Activated CD8-positive, alpha-beta T cell treated with anti-CD3 and anti-CD28 coated beads for 36 hours (primary cell): ENCODE measurements at regions of chr15 and their contacts with region 1.

Region 1: DNA sequence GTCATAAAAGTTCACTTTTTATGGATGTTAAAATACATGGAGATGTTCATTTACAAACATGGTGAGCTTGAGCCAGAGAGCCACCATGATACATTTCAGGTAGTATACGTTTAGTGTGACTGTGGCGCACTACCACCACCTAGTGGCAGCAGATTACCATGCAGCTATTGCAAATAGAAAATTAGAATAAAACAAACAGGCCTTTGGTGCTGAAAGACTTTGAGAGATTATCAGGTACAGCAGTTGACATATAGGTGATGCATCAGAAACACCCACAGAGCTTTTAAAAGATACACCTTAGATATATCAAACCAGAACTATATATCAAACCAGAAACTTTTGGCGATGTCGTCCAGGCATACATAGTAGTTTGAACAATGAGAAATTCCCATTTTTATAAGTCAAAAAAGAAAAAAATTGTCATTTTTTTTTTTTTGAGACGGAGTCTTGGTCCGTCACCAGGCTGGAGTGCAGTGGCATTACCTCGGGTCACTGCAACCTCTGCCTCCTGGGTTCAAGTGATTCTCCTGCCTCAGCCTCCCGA is 42.0 kb upstream of the ICE2 start:
- DNase-seq: peak; percentile 92
- ATAC-seq: peak; percentile 74
- H3K4me3 Mint-ChIP-seq: no peak overlapping the region
- H3K27ac Mint-ChIP-seq: peak overlapping the region; percentile 83
- H3K4me1 Mint-ChIP-seq: peaks cover 53% of the 10 kb centered on the region
- H3K27me3 Mint-ChIP-seq: no peaks in the 10 kb centered on the region
- CTCF ChIP-seq: peak; percentile 92

Region 2: GRCh38 chr15:60478566-60479360 is 42.1 kb before region 1 on chr15 and contains the start of gene ICE2:
- CTCF ChIA-PET with region 1: interaction called, 22 read pairs
- POLR2A ChIA-PET with region 1: interaction called, 5 read pairs
- intact Hi-C with region 1: no loop called
- DNase-seq: peak; percentile 99
- ATAC-seq: peak; percentile 87
- H3K4me3 Mint-ChIP-seq: peak within 1 kb of the TSS; percentile 96
- H3K27ac Mint-ChIP-seq: peak within 1 kb of the TSS; percentile 96
- H3K4me1 Mint-ChIP-seq: peaks cover 57% of the 10 kb centered on the region
- H3K27me3 Mint-ChIP-seq: no peaks in the 10 kb centered on the region
- CTCF ChIP-seq: no peak
- total RNA-seq, gene ICE2: 74.1 to 74.5 TPM

Region 3: GRCh38 chr15:60507596-60508424 is 13.1 kb before region 1 on chr15:
- CTCF ChIA-PET with region 1: interaction called, 132 read pairs
- POLR2A ChIA-PET with region 1: interaction called, 12 read pairs
- intact Hi-C with region 1: no loop called
- DNase-seq: peak; percentile 69
- ATAC-seq: peak; percentile 81
- H3K4me3 Mint-ChIP-seq: no peak overlapping the region
- H3K27ac Mint-ChIP-seq: peak overlapping the region; percentile 73
- H3K4me1 Mint-ChIP-seq: peaks cover 48% of the 10 kb centered on the region
- H3K27me3 Mint-ChIP-seq: no peaks in the 10 kb centered on the region
- CTCF ChIP-seq: peak; percentile 94

Region 4: DNA sequence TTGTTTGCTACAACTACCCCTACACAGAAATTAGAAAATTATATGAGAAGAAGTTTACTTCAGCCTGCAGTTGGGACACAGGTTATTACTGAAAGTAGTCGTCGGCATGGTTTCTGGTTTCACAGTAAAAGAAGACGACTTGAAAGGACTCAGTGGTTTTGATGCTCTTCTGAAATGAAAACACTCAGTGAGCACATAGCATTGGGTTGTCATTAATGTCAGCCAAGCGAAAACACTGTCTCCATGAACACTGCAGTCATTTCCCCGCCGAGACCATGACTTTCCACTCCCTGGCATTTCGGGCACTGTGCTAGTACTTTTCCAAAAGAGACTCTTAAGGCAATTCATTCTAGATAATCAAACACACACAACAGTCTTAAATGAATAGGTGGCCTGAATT is 27.2 kb after region 1 on chr15:
- CTCF ChIA-PET with region 1: interaction called, 68 read pairs
- POLR2A ChIA-PET with region 1: interaction called, 5 read pairs
- intact Hi-C with region 1: no loop called
- DNase-seq: peak; percentile 86
- ATAC-seq: peak; percentile 81
- H3K4me3 Mint-ChIP-seq: peak overlapping the region; percentile 70
- H3K27ac Mint-ChIP-seq: peak overlapping the region; percentile 96
- H3K4me1 Mint-ChIP-seq: peaks cover 93% of the 10 kb centered on the region
- H3K27me3 Mint-ChIP-seq: no peaks in the 10 kb centered on the region
- CTCF ChIP-seq: no peak

Region 5: GRCh38 chr15:60568301-60568742 is 47.4 kb after region 1 on chr15:
- CTCF ChIA-PET with region 1: interaction called, 34 read pairs
- POLR2A ChIA-PET with region 1: interaction called, 6 read pairs
- intact Hi-C with region 1: no loop called
- DNase-seq: peak; percentile 39
- ATAC-seq: peak; percentile 17
- H3K4me3 Mint-ChIP-seq: peak overlapping the region; percentile 36
- H3K27ac Mint-ChIP-seq: peak overlapping the region; percentile 78
- H3K4me1 Mint-ChIP-seq: peaks cover 89% of the 10 kb centered on the region
- H3K27me3 Mint-ChIP-seq: no peaks in the 10 kb centered on the region
- CTCF ChIP-seq: no peak

Region 6: GRCh38 chr15:60592371-60593169 is 71.7 kb after region 1 on chr15:
- CTCF ChIA-PET with region 1: interaction called, 12 read pairs
- POLR2A ChIA-PET with region 1: no interaction called
- intact Hi-C with region 1: no loop called
- DNase-seq: peak; percentile 89
- ATAC-seq: peak; percentile 89
- H3K4me3 Mint-ChIP-seq: peak overlapping the region; percentile 82
- H3K27ac Mint-ChIP-seq: peak overlapping the region; percentile 36
- H3K4me1 Mint-ChIP-seq: peaks cover 47% of the 10 kb centered on the region
- H3K27me3 Mint-ChIP-seq: no peaks in the 10 kb centered on the region
- CTCF ChIP-seq: peak; percentile 21